Heart left ventricle (tissue), 16 donors: ENCODE measurements at regions of chr6 and their contacts with region 1.

Region 1: GRCh38 chr6:11009353-11009752 is 34.8 kb downstream of the ELOVL2 start:
- DNase-seq: no peak
- ATAC-seq: peak in 1 of 4 donors; percentile 42
- H3K4me3 ChIP-seq: no peak overlapping the region
- H3K27ac ChIP-seq: peak overlapping the region in 2 of 12 donors; percentile 19 to 40
- H3K4me1 ChIP-seq: peaks cover 0 to 29% (median 7%) of the 10 kb centered on the region in 12 donors
- H3K27me3 ChIP-seq: peaks cover 0 to 14% (median 0%) of the 10 kb centered on the region in 9 donors
- CTCF ChIP-seq: no peak
- POLR2A ChIP-seq: no peak

Region 2: DNA sequence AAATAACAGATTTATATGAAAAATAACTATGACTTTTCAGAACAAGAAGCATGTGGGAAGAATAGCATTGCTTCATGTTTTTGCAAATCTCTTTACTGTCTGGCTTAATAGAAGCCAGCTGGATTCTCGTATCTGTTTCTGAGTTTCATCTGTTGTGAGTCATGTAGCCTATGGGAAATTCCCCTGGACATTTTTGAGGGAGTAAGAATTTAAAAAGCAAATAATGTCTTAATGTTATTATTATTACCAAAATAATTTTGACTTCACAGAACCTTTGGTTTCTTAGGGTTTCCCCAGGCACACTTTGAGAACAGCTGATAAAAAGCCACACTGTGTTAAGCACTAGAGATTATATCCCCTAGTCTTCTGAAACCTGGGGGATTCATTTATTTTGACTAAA is 46.7 kb before region 1 on chr6:
- intact Hi-C with region 1: loop called in 1 of 10 experiments (anchors 5 kb)
- DNase-seq: no peak
- ATAC-seq: peak in 1 of 4 donors; percentile 50
- H3K4me3 ChIP-seq: no peak overlapping the region
- H3K27ac ChIP-seq: no peak overlapping the region
- H3K4me1 ChIP-seq: peaks cover 0 to 12% (median 0%) of the 10 kb centered on the region in 12 donors
- H3K27me3 ChIP-seq: no peaks in the 10 kb centered on the region
- CTCF ChIP-seq: no peak
- POLR2A ChIP-seq: no peak